ENCODE measurements at regions of chr22 and their contacts with region 1.

Region 1: DNA sequence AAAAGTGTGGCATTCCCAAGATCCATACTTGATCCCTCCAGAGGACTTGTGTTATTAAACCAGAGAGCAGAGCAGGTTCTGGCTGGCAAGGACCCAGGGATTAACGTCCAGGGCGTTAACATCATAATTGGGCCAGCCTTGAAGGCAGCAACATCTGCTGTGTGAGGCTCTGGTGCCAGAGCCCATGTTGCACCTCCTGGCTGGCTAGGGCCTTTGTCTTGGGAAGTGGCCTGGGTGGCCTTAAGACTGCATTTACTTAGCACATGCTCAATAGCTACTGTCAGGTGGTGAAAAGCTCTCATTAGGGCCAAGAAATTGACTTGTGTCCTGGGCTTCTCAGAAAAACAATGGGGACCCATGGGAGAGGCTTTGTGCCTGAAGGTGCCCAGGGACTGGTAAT is 66.6 kb downstream of the CACNG2 start:
- DNase-seq: no peak

Region 2: GRCh38 chr22:36497910-36498665 is 138.8 kb before region 1 on chr22:
- in situ Hi-C with region 1: no loop called
- DNase-seq: no peak

Region 3: GRCh38 chr22:36715647-36716046 is 78.7 kb after region 1 on chr22:
- in situ Hi-C with region 1: loop called (anchors 5 kb)
- DNase-seq: no peak

Measured in Caki2 (cell line).